CD4-positive, alpha-beta memory T cell (primary cell): ENCODE measurements at regions of chr6 and their contacts with region 1.

Region 1: GRCh38 chr6:36678518-36679027 is at the start of gene CDKN1A:
- DNase-seq: peak; percentile 62 to 84 (median 72)
- H3K4me3 ChIP-seq: peak within 1 kb of the TSS; percentile 77 to 90
- H3K4me3 Mint-ChIP-seq: peak within 1 kb of the TSS; percentile 89 to 98 (median 94)
- H3K27ac ChIP-seq: peak within 1 kb of the TSS; percentile 80
- H3K27ac Mint-ChIP-seq: peak within 1 kb of the TSS; percentile 90 to 100 (median 95)
- H3K4me1 ChIP-seq: peaks cover 50% of the 10 kb centered on the region
- H3K4me1 Mint-ChIP-seq: peaks cover 26 to 63% (median 47%) of the 10 kb centered on the region in 4 donors
- H3K27me3 ChIP-seq: no peaks in the 10 kb centered on the region
- H3K27me3 Mint-ChIP-seq: peaks cover 0 to 6% of the 10 kb centered on the region in 2 donors
- total RNA-seq, gene CDKN1A: 10.5 to 12.9 TPM

Region 2: GRCh38 chr6:36340618-36341454 is 337.7 kb before region 1 on chr6:
- CTCF ChIA-PET with region 1: interaction called, 7 read pairs
- POLR2A ChIA-PET with region 1: no interaction called
- intact Hi-C with region 1: loop called (anchors 1 kb)
- DNase-seq: peak; percentile 59 to 66 (median 64)
- H3K4me3 ChIP-seq: no peak overlapping the region
- H3K4me3 Mint-ChIP-seq: peak overlapping the region; percentile 63 to 85 (median 74)
- H3K27ac ChIP-seq: no peak overlapping the region
- H3K27ac Mint-ChIP-seq: peak overlapping the region in 4 of 7 donors; percentile 7 to 88 (median 58)
- H3K4me1 ChIP-seq: peaks cover 20% of the 10 kb centered on the region
- H3K4me1 Mint-ChIP-seq: peaks cover 9 to 33% (median 14%) of the 10 kb centered on the region in 4 donors
- H3K27me3 ChIP-seq: peaks cover 7% of the 10 kb centered on the region
- H3K27me3 Mint-ChIP-seq: peaks cover 6 to 9% of the 10 kb centered on the region in 2 donors

Region 3: DNA sequence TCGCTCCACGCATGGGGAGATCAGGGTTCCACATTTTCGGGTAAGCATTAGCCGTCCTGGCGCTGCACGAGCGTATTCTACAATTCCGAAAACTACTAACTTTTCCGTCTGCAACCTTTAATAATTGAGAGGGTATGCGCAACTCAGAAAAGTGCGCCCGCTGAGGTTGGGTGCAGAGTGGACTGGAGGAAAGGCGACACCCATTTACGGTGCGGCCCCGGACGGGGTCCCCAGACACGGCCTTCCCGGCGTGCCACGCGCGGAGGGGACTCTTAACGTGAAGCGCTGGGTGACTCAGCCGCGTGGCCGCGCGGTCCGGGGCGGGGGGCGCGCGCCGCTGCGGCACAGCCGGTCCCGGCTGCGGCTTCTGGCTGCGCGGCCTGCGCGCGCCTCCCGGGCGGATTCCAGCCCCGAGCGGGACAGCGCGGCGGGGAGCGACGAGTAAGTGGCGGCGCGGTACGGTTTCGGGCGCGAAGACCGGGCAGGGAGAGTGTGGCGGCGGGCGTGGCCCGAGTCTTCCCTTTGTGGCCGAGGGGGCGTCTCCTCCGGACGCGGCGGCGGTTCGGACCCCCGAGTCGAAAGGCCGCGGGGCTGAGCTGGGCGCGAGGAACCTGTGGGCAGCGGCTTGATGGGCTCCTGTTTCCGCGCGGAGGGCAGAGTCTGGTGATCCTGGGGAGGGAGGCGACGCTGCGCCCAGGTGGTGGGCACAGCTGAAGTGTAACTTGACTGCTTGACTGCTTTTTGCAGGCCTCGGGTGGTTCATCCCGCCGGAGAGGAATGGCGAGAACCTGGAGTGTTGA is 235.7 kb before region 1 on chr6 and contains the starts of genes KCTD20 and PXT1:
- CTCF ChIA-PET with region 1: interaction called, 3 read pairs
- POLR2A ChIA-PET with region 1: no interaction called
- intact Hi-C with region 1: loop called (anchors 1 kb)
- DNase-seq: peak; percentile 83 to 86 (median 85)
- H3K4me3 ChIP-seq: peak within 1 kb of the TSS; percentile 85 to 96
- H3K4me3 Mint-ChIP-seq: peak within 1 kb of the TSS; percentile 92 to 99 (median 97)
- H3K27ac ChIP-seq: peak within 1 kb of the TSS; percentile 92
- H3K27ac Mint-ChIP-seq: peak within 1 kb of the TSS; percentile 87 to 99 (median 99)
- H3K4me1 ChIP-seq: peaks cover 53% of the 10 kb centered on the region
- H3K4me1 Mint-ChIP-seq: peaks cover 27 to 61% (median 42%) of the 10 kb centered on the region in 4 donors
- H3K27me3 ChIP-seq: no peaks in the 10 kb centered on the region
- H3K27me3 Mint-ChIP-seq: no peaks in the 10 kb centered on the region
- total RNA-seq, gene KCTD20: 35.2 to 38.9 TPM
- total RNA-seq, gene PXT1: 0.25 TPM in 1 of 2 experiments, not detected in the other

Region 4: GRCh38 chr6:36594029-36594815 is 84.4 kb before region 1 on chr6 and contains the start of gene SRSF3:
- CTCF ChIA-PET with region 1: interaction called, 11 read pairs
- POLR2A ChIA-PET with region 1: interaction called, 13 read pairs
- intact Hi-C with region 1: loop called (anchors 1 kb)
- DNase-seq: peak; percentile 97 to 98 (median 98)
- H3K4me3 ChIP-seq: peak within 1 kb of the TSS; percentile 89 to 91
- H3K4me3 Mint-ChIP-seq: peak within 1 kb of the TSS; percentile 92 to 100 (median 98)
- H3K27ac ChIP-seq: peak within 1 kb of the TSS; percentile 94
- H3K27ac Mint-ChIP-seq: peak within 1 kb of the TSS; percentile 97 to 100 (median 99)
- H3K4me1 ChIP-seq: peaks cover 46% of the 10 kb centered on the region
- H3K4me1 Mint-ChIP-seq: peaks cover 20 to 58% (median 35%) of the 10 kb centered on the region in 4 donors
- H3K27me3 ChIP-seq: no peaks in the 10 kb centered on the region
- H3K27me3 Mint-ChIP-seq: no peaks in the 10 kb centered on the region
- total RNA-seq, gene SRSF3: 337 to 350 TPM

Region 5: GRCh38 chr6:36615018-36615761 is 63.4 kb before region 1 on chr6:
- CTCF ChIA-PET with region 1: interaction called, 36 read pairs
- POLR2A ChIA-PET with region 1: interaction called, 7 read pairs
- intact Hi-C with region 1: loop called (anchors 1 kb)
- DNase-seq: peak; percentile 50 to 67 (median 65)
- H3K4me3 ChIP-seq: no peak overlapping the region
- H3K4me3 Mint-ChIP-seq: no peak overlapping the region
- H3K27ac ChIP-seq: no peak overlapping the region
- H3K27ac Mint-ChIP-seq: peak overlapping the region; percentile 52 to 87 (median 82)
- H3K4me1 ChIP-seq: peaks cover 9% of the 10 kb centered on the region
- H3K4me1 Mint-ChIP-seq: peaks cover 12 to 28% (median 14%) of the 10 kb centered on the region in 4 donors
- H3K27me3 ChIP-seq: no peaks in the 10 kb centered on the region
- H3K27me3 Mint-ChIP-seq: no peaks in the 10 kb centered on the region

Region 6: GRCh38 chr6:36662827-36663362 is 15.7 kb before region 1 on chr6:
- CTCF ChIA-PET with region 1: interaction called, 12 read pairs
- POLR2A ChIA-PET with region 1: interaction called, 3 read pairs
- intact Hi-C with region 1: no loop called
- DNase-seq: no peak
- H3K4me3 ChIP-seq: no peak overlapping the region
- H3K4me3 Mint-ChIP-seq: no peak overlapping the region
- H3K27ac ChIP-seq: no peak overlapping the region
- H3K27ac Mint-ChIP-seq: no peak overlapping the region
- H3K4me1 ChIP-seq: no peaks in the 10 kb centered on the region
- H3K4me1 Mint-ChIP-seq: peaks cover 5 to 10% (median 8%) of the 10 kb centered on the region in 4 donors
- H3K27me3 ChIP-seq: peaks cover 14% of the 10 kb centered on the region
- H3K27me3 Mint-ChIP-seq: peaks cover 8 to 16% of the 10 kb centered on the region in 2 donors

Region 7: GRCh38 chr6:37538107-37538506 is 859.5 kb after region 1 on chr6:
- CTCF ChIA-PET with region 1: no interaction called
- POLR2A ChIA-PET with region 1: no interaction called
- intact Hi-C with region 1: no loop called
- DNase-seq: no peak
- H3K4me3 ChIP-seq: no peak overlapping the region
- H3K4me3 Mint-ChIP-seq: no peak overlapping the region
- H3K27ac ChIP-seq: no peak overlapping the region
- H3K27ac Mint-ChIP-seq: peak overlapping the region in 5 of 7 donors; percentile 50 to 92 (median 71)
- H3K4me1 ChIP-seq: peaks cover 10% of the 10 kb centered on the region
- H3K4me1 Mint-ChIP-seq: peaks cover 3 to 27% (median 21%) of the 10 kb centered on the region in 4 donors
- H3K27me3 ChIP-seq: no peaks in the 10 kb centered on the region
- H3K27me3 Mint-ChIP-seq: no peaks in the 10 kb centered on the region